Psoas muscle (tissue), 8 donors: ENCODE measurements at regions of chr18 and their contacts with region 1.

Region 1: GRCh38 chr18:25062720-25063119 is 289.2 kb downstream of the ZNF521 start:
- DNase-seq: no peak
- ATAC-seq: peak in 1 of 4 donors; percentile 58
- H3K4me3 ChIP-seq: no peak overlapping the region
- H3K27ac ChIP-seq: no peak overlapping the region
- H3K4me1 ChIP-seq: no peaks in the 10 kb centered on the region
- H3K27me3 ChIP-seq: no peaks in the 10 kb centered on the region
- CTCF ChIP-seq: no peak

Region 2: GRCh38 chr18:24968238-24968775 is 94.4 kb before region 1 on chr18:
- intact Hi-C with region 1: loop called in 1 of 2 experiments (anchors 5 kb)
- DNase-seq: no peak
- ATAC-seq: no peak
- H3K4me3 ChIP-seq: no peak overlapping the region
- H3K27ac ChIP-seq: no peak overlapping the region
- H3K4me1 ChIP-seq: no peaks in the 10 kb centered on the region
- H3K27me3 ChIP-seq: no peaks in the 10 kb centered on the region
- CTCF ChIP-seq: no peak

Region 3: GRCh38 chr18:25136416-25137196 is 73.9 kb after region 1 on chr18:
- intact Hi-C with region 1: no loop called
- DNase-seq: no peak
- ATAC-seq: peak in 2 of 4 donors; percentile 10 to 45
- H3K4me3 ChIP-seq: no peak overlapping the region
- H3K27ac ChIP-seq: no peak overlapping the region
- H3K4me1 ChIP-seq: peaks cover 35% of the 10 kb centered on the region
- H3K27me3 ChIP-seq: no peaks in the 10 kb centered on the region
- CTCF ChIP-seq: no peak